CD4-positive, alpha-beta memory T cell (primary cell): ENCODE measurements at regions of chr19 and their contacts with region 1.

Region 1: DNA sequence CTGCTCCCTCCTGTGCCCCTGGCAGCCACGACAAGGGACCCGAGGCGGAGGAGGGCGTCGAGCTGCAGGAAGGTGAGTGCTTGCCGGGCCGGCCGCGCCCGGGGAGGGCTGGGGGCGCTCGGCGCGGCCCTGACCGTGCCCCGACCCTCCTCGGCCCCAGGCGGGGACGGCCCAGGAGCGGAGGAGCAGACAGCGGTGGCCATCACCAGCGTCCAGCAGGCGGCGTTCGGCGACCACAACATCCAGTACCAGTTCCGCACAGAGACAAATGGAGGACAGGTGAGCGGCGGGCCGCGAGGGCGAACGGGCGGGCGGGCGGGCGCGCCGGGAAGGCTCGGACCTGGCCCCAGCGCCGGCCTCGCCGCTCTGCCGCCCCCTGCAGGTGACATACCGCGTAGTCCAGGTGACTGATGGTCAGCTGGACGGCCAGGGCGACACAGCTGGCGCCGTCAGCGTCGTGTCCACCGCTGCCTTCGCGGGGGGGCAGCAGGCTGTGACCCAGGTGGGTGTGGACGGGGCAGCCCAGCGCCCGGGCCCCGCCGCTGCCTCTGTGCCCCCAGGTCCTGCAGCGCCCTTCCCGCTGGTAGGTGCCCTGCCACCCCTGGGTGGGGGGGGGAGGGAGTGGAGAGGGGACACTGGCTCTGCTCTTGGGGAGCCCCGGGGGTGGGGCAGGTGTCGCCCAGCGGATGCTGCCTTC is 807 bp downstream of the USF2 start:
- DNase-seq: peak; percentile 68 to 74 (median 70)
- H3K4me3 ChIP-seq: peak overlapping the region in 1 of 2 donors; percentile 41
- H3K4me3 Mint-ChIP-seq: peak overlapping the region; percentile 65 to 83 (median 77)
- H3K27ac ChIP-seq: peak overlapping the region; percentile 41
- H3K27ac Mint-ChIP-seq: peak overlapping the region; percentile 61 to 86 (median 77)
- H3K4me1 ChIP-seq: peaks cover 37% of the 10 kb centered on the region
- H3K4me1 Mint-ChIP-seq: peaks cover 20 to 53% (median 38%) of the 10 kb centered on the region in 4 donors
- H3K27me3 ChIP-seq: no peaks in the 10 kb centered on the region
- H3K27me3 Mint-ChIP-seq: no peaks in the 10 kb centered on the region

Region 2: GRCh38 chr19:35154525-35155406 is 114.8 kb before region 1 on chr19 and contains the start of gene FXYD5:
- CTCF ChIA-PET with region 1: no interaction called
- POLR2A ChIA-PET with region 1: interaction called, 16 read pairs
- intact Hi-C with region 1: no loop called
- DNase-seq: peak; percentile 60 to 84 (median 64)
- H3K4me3 ChIP-seq: peak within 1 kb of the TSS; percentile 91 to 95
- H3K4me3 Mint-ChIP-seq: peak within 1 kb of the TSS; percentile 98 to 100 (median 99)
- H3K27ac ChIP-seq: peak within 1 kb of the TSS; percentile 91
- H3K27ac Mint-ChIP-seq: peak within 1 kb of the TSS; percentile 98 to 99 (median 99)
- H3K4me1 ChIP-seq: peaks cover 56% of the 10 kb centered on the region
- H3K4me1 Mint-ChIP-seq: peaks cover 35 to 68% (median 46%) of the 10 kb centered on the region in 4 donors
- H3K27me3 ChIP-seq: no peaks in the 10 kb centered on the region
- H3K27me3 Mint-ChIP-seq: no peaks in the 10 kb centered on the region
- total RNA-seq, gene FXYD5: 473 to 484 TPM

Region 3: DNA sequence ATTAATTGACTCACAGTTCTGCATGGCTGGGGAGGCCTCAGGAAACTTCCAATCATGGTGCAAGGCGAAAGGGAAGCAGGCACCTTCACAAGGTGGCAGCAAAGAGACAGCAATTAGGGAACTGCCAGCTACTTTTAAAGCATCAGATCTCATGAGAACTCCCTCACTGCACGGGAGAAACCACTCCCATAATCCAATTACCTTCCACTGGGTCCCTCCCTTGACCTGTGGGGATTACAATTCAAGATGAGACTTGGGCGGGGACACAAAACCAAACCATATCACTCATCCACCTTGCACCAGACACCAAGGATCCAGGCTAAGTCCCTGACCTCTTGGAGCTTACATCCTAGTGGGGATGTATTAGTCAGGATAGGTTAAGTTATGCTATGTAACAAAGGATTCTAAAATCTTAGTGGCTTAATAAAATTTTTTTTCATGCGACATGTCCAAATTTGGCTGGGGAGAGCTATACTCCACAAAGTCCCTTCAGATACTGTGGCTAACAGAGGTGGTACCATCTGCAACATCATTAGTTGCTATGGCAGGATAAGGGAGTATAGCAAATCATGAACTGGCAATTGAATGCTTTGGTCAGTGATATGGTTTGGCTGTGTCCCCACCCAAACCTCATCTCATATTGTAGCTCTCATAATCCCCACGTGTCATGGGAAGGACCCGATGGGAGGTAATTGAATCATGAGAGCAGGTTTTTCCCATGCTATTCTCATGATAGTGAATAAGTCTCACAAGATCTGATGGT is 32.8 kb before region 1 on chr19:
- CTCF ChIA-PET with region 1: interaction called, 7 read pairs
- POLR2A ChIA-PET with region 1: interaction called, 48 read pairs
- intact Hi-C with region 1: loop called (anchors 2 kb)
- DNase-seq: peak in 3 of 5 donors; percentile 34 to 38 (median 36)
- H3K4me3 ChIP-seq: no peak overlapping the region
- H3K4me3 Mint-ChIP-seq: no peak overlapping the region
- H3K27ac ChIP-seq: no peak overlapping the region
- H3K27ac Mint-ChIP-seq: peak overlapping the region in 5 of 7 donors; percentile 30 to 93 (median 59)
- H3K4me1 ChIP-seq: peaks cover 34% of the 10 kb centered on the region
- H3K4me1 Mint-ChIP-seq: peaks cover 20 to 42% (median 37%) of the 10 kb centered on the region in 4 donors
- H3K27me3 ChIP-seq: no peaks in the 10 kb centered on the region
- H3K27me3 Mint-ChIP-seq: no peaks in the 10 kb centered on the region

Region 4: GRCh38 chr19:35279985-35280821 is 10.6 kb after region 1 on chr19:
- CTCF ChIA-PET with region 1: interaction called, 3 read pairs
- POLR2A ChIA-PET with region 1: interaction called, 14 read pairs
- intact Hi-C with region 1: no loop called
- DNase-seq: no peak
- H3K4me3 ChIP-seq: no peak overlapping the region
- H3K4me3 Mint-ChIP-seq: no peak overlapping the region
- H3K27ac ChIP-seq: no peak overlapping the region
- H3K27ac Mint-ChIP-seq: peak overlapping the region in 4 of 7 donors; percentile 12 to 81 (median 48)
- H3K4me1 ChIP-seq: no peaks in the 10 kb centered on the region
- H3K4me1 Mint-ChIP-seq: peaks cover 2 to 9% (median 4%) of the 10 kb centered on the region in 4 donors
- H3K27me3 ChIP-seq: no peaks in the 10 kb centered on the region
- H3K27me3 Mint-ChIP-seq: peaks cover 6 to 15% of the 10 kb centered on the region in 2 donors

Region 5: GRCh38 chr19:35330475-35330874 is 60.9 kb after region 1 on chr19:
- CTCF ChIA-PET with region 1: no interaction called
- POLR2A ChIA-PET with region 1: no interaction called
- intact Hi-C with region 1: no loop called
- DNase-seq: peak in 1 of 5 donors; percentile 18
- H3K4me3 ChIP-seq: no peak overlapping the region
- H3K4me3 Mint-ChIP-seq: no peak overlapping the region
- H3K27ac ChIP-seq: no peak overlapping the region
- H3K27ac Mint-ChIP-seq: no peak overlapping the region
- H3K4me1 ChIP-seq: peaks cover 9% of the 10 kb centered on the region
- H3K4me1 Mint-ChIP-seq: peaks cover 6 to 15% (median 10%) of the 10 kb centered on the region in 4 donors
- H3K27me3 ChIP-seq: no peaks in the 10 kb centered on the region
- H3K27me3 Mint-ChIP-seq: peaks cover 7 to 22% of the 10 kb centered on the region in 2 donors

Region 6: GRCh38 chr19:35395382-35396199 is 126.0 kb after region 1 on chr19:
- CTCF ChIA-PET with region 1: no interaction called
- POLR2A ChIA-PET with region 1: no interaction called
- intact Hi-C with region 1: no loop called
- DNase-seq: no peak
- H3K4me3 ChIP-seq: no peak overlapping the region
- H3K4me3 Mint-ChIP-seq: no peak overlapping the region
- H3K27ac ChIP-seq: no peak overlapping the region
- H3K27ac Mint-ChIP-seq: no peak overlapping the region
- H3K4me1 ChIP-seq: no peaks in the 10 kb centered on the region
- H3K4me1 Mint-ChIP-seq: no peaks in the 10 kb centered on the region
- H3K27me3 ChIP-seq: no peaks in the 10 kb centered on the region
- H3K27me3 Mint-ChIP-seq: peaks cover 2% of the 10 kb centered on the region in 2 donors

Region 7: DNA sequence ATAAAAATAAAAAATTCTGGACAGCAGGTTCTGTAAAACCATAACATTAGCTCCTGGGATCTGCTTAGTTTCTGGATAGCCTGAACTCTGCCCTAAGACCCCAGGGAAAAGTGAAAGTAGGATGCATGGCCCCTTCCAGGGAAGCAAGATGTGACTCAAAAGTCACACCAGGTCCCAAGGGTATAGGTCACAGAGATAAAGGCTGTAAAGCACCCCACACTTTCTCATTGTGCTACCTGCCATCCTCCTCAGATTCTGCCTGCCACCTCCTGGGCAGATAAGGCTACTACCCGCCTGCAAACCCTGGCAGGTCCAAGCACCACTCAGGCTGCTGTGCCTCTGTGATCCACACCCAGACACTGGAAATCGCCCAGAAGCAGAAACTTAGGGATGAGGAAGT is 199.1 kb after region 1 on chr19:
- CTCF ChIA-PET with region 1: interaction called, 4 read pairs
- POLR2A ChIA-PET with region 1: no interaction called
- intact Hi-C with region 1: loop called (anchors 1 kb)
- DNase-seq: peak; percentile 64 to 73 (median 71)
- H3K4me3 ChIP-seq: no peak overlapping the region
- H3K4me3 Mint-ChIP-seq: no peak overlapping the region
- H3K27ac ChIP-seq: no peak overlapping the region
- H3K27ac Mint-ChIP-seq: peak overlapping the region in 1 of 7 donors; percentile 47
- H3K4me1 ChIP-seq: peaks cover 12% of the 10 kb centered on the region
- H3K4me1 Mint-ChIP-seq: peaks cover 7 to 17% (median 16%) of the 10 kb centered on the region in 4 donors
- H3K27me3 ChIP-seq: no peaks in the 10 kb centered on the region
- H3K27me3 Mint-ChIP-seq: peaks cover 0 to 1% of the 10 kb centered on the region in 2 donors